GM10248 (cell line): ENCODE measurements at regions of chr11 and their contacts with region 1.

Region 1: DNA sequence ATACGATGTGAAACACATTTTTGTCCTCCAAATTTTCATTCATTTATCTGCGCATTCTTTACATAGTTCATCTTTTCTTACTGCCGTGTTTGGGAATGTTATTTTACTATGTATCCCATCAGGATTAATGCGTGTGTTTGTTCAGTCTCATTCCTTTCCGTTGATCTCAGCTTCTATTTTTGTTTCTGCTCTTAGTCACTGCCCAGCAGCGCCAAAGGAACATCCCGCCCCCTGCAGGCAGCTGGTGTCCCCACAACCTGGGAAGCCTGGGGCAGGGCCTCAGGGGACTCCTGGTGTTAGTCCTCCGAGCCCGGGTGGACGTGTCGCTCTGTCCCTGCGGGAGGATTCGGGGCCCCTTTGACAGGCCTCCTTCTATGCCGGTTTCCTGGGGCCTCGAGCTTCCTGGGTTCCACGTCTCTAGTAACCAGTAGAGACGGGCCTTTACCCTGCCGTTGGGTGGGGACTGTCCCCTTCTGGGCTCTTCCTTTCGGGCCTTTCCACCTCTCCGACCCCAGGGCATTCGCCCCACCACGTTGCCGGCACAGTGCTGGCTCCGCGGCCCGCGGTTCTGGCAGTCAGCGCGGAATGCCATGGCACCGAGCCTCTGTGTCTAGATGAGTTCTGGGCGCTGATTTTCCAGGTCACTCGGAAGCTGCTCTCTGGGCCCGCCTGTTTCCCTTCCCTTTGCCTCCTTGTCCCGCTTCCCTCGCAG is 39.8 kb downstream of the WEE1 start:
- DNase-seq: peak; percentile 87
- CTCF ChIP-seq: peak; percentile 96

Region 2: GRCh38 chr11:9573052-9573774 is 40.1 kb before region 1 on chr11 and contains the start of gene WEE1:
- CTCF ChIA-PET with region 1: interaction called, 27 read pairs
- POLR2A ChIA-PET with region 1: interaction called, 5 read pairs
- DNase-seq: peak; percentile 98
- CTCF ChIP-seq: no peak

Region 3: GRCh38 chr11:9601037-9601875 is 12.0 kb before region 1 on chr11:
- CTCF ChIA-PET with region 1: interaction called, 106 read pairs
- POLR2A ChIA-PET with region 1: interaction called, 3 read pairs
- DNase-seq: peak; percentile 73
- CTCF ChIP-seq: no peak

Region 4: DNA sequence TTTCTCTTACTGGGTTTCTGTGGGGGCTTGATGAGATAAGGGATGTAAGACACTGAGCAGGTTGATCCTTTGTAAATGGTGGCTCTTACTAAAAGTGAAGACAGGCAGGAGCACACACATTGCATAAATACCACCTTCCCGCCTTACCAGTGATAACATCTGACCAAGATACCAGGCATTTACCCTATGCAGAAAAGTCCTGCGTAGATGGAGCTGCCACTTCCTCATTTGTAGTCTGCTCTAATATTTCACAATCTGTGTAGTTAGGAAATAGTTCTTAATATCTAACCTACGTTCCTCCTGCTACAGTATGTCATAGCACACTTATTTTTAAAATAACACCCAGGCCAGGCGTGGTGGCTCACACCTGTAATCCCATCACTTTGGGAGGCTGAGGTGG is 26.7 kb after region 1 on chr11:
- CTCF ChIA-PET with region 1: interaction called, 10 read pairs
- POLR2A ChIA-PET with region 1: no interaction called
- DNase-seq: no peak
- CTCF ChIP-seq: no peak

Region 5: DNA sequence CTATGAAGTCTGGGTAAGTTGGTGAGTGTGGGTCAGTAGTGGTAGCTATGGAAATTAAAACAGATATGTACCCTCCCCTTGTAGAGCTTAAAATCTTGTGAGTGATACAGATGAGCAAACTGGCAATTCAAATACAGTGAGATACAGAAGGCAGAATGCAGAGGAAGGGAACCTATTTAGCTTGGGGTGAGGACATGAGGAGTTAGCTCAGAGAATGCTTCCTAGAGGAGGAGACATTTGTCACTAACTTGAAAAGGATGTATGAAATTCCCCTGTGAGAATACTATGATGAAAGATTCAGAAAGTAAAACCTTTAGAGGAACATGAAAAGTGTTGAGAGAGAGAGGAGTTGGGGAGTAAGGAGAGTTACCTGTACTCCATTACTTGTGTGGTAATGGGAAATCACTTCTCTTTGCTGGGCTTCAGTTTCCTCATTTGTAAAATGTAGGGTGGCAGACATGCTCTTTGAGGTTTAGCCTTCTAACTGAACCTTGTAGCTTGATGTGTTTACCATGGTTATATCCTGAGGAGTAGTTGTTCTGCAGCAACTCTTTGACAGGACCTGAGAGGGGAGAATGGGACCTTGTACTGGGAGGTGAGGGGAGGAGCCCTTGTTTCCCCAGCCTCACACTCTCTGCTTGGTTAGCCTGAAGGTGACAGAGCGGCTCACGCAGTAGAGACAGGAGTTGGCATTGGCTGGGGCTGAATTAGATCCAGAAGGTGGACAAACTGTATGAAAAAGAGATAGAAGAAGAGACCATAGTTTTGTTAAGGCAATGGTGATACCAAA is 68.5 kb after region 1 on chr11:
- CTCF ChIA-PET with region 1: interaction called, 15 read pairs
- POLR2A ChIA-PET with region 1: no interaction called
- DNase-seq: no peak
- CTCF ChIP-seq: no peak

Region 6: GRCh38 chr11:9716275-9717039 is 103.2 kb after region 1 on chr11:
- CTCF ChIA-PET with region 1: interaction called, 21 read pairs
- POLR2A ChIA-PET with region 1: interaction called, 3 read pairs
- DNase-seq: peak; percentile 64
- CTCF ChIP-seq: no peak

Region 7: DNA sequence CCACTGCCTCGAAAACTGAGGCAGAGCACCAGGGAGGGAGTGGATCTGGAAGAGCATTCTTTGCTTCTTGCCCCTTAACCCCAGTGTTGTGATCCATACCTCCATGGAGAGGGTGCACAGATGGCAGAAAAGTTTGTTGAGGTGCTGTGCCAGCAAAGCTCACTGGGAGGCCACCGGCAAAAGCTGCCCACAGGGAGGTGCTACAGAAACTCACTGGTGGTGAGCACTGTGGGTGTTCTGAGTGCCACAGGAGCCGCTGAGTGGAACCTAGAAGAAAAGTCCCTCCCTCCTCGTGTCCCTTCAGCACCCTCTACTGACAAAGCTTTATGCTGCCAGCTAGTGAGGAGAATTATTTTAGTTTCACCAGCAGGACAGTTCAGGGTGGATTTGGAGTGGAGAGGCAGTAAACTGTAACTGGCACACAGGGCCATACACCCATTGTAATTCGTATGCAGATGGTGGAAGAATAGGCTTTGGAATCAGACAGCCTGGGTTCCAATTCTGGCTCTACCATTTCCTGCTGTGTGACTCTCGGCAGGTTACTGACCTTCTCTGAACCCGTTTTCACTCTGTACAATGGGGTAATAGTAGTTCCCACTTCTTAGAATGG is 135.2 kb after region 1 on chr11:
- CTCF ChIA-PET with region 1: interaction called, 84 read pairs
- POLR2A ChIA-PET with region 1: no interaction called
- DNase-seq: peak; percentile 77
- CTCF ChIP-seq: peak; percentile 91